CD4-positive, alpha-beta T cell (primary cell): ENCODE measurements at regions of chr3 and their contacts with region 1.

Region 1: DNA sequence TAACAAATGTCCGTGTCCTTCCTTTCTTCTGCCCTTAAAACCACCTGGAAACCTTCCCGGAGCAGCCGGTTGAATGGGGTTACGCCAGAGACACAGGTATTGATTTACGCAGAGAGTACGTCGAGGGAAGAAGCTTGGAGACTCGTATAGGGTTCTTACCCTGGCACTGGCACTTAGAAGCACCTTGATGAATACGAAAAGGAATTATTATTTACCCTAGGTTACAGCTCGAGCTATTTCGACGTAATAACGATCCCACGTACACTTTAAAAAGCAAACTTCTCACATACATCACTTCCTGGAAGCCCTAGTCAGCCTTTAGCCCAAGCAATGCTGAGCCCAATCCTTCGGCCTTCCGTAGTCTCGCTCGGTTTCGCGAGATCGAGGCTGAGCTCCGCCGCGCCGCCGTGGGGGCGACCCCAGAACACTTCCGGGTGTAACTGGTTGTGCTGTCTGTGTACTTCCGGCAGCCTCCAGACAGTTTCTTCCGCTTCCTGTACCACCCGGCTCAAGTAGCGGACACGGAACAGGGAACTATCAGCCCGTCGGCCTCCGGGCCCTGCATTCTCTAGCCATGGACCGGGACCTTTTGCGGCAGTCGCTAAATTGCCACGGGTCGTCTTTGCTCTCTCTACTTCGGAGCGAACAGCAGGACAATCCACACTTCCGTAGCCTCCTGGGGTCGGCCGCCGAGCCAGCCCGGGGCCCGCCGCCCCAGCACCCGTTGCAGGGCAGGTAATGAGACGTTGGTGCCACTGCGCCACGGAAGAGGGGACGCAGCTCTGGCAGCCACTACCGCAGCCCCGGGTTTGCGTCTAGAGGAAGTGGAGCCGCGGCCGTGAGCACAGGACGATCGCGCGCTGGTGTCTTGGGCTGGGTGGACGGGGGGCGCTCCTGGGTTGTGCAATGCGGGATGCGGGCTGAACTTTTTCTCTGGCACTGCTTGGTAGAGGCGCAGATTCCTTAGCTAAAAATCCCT is at the start of gene TTC14:
- DNase-seq: peak; percentile 85 to 97 (median 90)
- ATAC-seq: peak; percentile 87
- H3K4me3 ChIP-seq: peak within 1 kb of the TSS; percentile 83
- H3K4me3 Mint-ChIP-seq: peak within 1 kb of the TSS; percentile 96
- H3K27ac ChIP-seq: peak within 1 kb of the TSS; percentile 93
- H3K27ac Mint-ChIP-seq: peak within 1 kb of the TSS; percentile 95
- H3K4me1 ChIP-seq: peaks cover 12% of the 10 kb centered on the region
- H3K4me1 Mint-ChIP-seq: peaks cover 47% of the 10 kb centered on the region
- H3K27me3 ChIP-seq: no peaks in the 10 kb centered on the region
- H3K27me3 Mint-ChIP-seq: peaks cover 25% of the 10 kb centered on the region
- CTCF ChIP-seq: no peak
- total RNA-seq, gene TTC14: 79.0 to 84.4 TPM

Region 2: GRCh38 chr3:179355996-179356395 is 1246.0 kb before region 1 on chr3:
- CTCF ChIA-PET with region 1: no interaction called
- POLR2A ChIA-PET with region 1: no interaction called
- intact Hi-C with region 1: loop called in 1 of 2 experiments (anchors 10 kb)
- DNase-seq: no peak
- ATAC-seq: no peak
- H3K4me3 ChIP-seq: no peak overlapping the region
- H3K4me3 Mint-ChIP-seq: no peak overlapping the region
- H3K27ac ChIP-seq: no peak overlapping the region
- H3K27ac Mint-ChIP-seq: no peak overlapping the region
- H3K4me1 ChIP-seq: no peaks in the 10 kb centered on the region
- H3K4me1 Mint-ChIP-seq: peaks cover 32% of the 10 kb centered on the region
- H3K27me3 ChIP-seq: no peaks in the 10 kb centered on the region
- H3K27me3 Mint-ChIP-seq: no peaks in the 10 kb centered on the region
- CTCF ChIP-seq: no peak

Region 3: GRCh38 chr3:179562591-179563270 is 1039.2 kb before region 1 on chr3 and contains the start of gene ACTL6A:
- CTCF ChIA-PET with region 1: no interaction called
- POLR2A ChIA-PET with region 1: interaction called, 3 read pairs
- intact Hi-C with region 1: loop called in 1 of 2 experiments (anchors 5 kb)
- DNase-seq: peak; percentile 94 to 99 (median 98)
- ATAC-seq: peak; percentile 90
- H3K4me3 ChIP-seq: peak within 1 kb of the TSS; percentile 83
- H3K4me3 Mint-ChIP-seq: peak within 1 kb of the TSS; percentile 91
- H3K27ac ChIP-seq: peak within 1 kb of the TSS; percentile 38 to 57
- H3K27ac Mint-ChIP-seq: peak within 1 kb of the TSS; percentile 85
- H3K4me1 ChIP-seq: peaks cover 31% of the 10 kb centered on the region
- H3K4me1 Mint-ChIP-seq: peaks cover 30% of the 10 kb centered on the region
- H3K27me3 ChIP-seq: no peaks in the 10 kb centered on the region
- H3K27me3 Mint-ChIP-seq: peaks cover 5% of the 10 kb centered on the region
- CTCF ChIP-seq: no peak
- total RNA-seq, gene ACTL6A: 19.0 to 19.3 TPM

Region 4: GRCh38 chr3:179653096-179653797 is 948.7 kb before region 1 on chr3:
- CTCF ChIA-PET with region 1: no interaction called
- POLR2A ChIA-PET with region 1: interaction called, 12 read pairs
- intact Hi-C with region 1: loop called in 1 of 2 experiments (anchors 5 kb)
- DNase-seq: peak; percentile 44 to 82 (median 56)
- ATAC-seq: peak; percentile 64
- H3K4me3 ChIP-seq: peak overlapping the region; percentile 94
- H3K4me3 Mint-ChIP-seq: peak overlapping the region; percentile 98
- H3K27ac ChIP-seq: peak overlapping the region; percentile 47 to 48
- H3K27ac Mint-ChIP-seq: peak overlapping the region; percentile 91
- H3K4me1 ChIP-seq: peaks cover 22% of the 10 kb centered on the region
- H3K4me1 Mint-ChIP-seq: peaks cover 45% of the 10 kb centered on the region
- H3K27me3 ChIP-seq: no peaks in the 10 kb centered on the region
- H3K27me3 Mint-ChIP-seq: no peaks in the 10 kb centered on the region
- CTCF ChIP-seq: no peak

Region 5: DNA sequence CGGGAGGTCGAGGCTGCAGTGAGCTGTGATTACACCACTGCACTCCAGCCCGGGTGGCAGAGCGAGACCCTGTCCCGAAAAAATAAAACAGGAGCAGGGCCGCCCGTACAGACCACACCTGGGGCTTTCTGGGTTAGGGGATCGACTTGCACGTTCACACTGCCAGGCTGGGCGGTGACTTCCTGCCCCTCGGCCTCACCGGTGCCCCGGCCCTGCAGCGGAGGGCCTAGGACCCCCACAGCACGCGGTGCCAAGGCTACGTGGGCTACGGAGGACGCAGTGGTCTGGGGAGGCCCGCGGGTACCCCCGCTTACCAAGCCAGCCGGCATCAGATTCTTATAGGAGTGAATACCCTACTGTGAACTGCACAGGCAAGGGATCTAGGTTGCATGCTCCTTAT is 11.6 kb before region 1 on chr3:
- CTCF ChIA-PET with region 1: no interaction called
- POLR2A ChIA-PET with region 1: no interaction called
- intact Hi-C with region 1: no loop called
- DNase-seq: no peak
- ATAC-seq: no peak
- H3K4me3 ChIP-seq: no peak overlapping the region
- H3K4me3 Mint-ChIP-seq: no peak overlapping the region
- H3K27ac ChIP-seq: no peak overlapping the region
- H3K27ac Mint-ChIP-seq: no peak overlapping the region
- H3K4me1 ChIP-seq: no peaks in the 10 kb centered on the region
- H3K4me1 Mint-ChIP-seq: no peaks in the 10 kb centered on the region
- H3K27me3 ChIP-seq: peaks cover 8 to 26% of the 10 kb centered on the region in 2 experiments
- H3K27me3 Mint-ChIP-seq: peaks cover 61% of the 10 kb centered on the region
- CTCF ChIP-seq: no peak

Region 6: DNA sequence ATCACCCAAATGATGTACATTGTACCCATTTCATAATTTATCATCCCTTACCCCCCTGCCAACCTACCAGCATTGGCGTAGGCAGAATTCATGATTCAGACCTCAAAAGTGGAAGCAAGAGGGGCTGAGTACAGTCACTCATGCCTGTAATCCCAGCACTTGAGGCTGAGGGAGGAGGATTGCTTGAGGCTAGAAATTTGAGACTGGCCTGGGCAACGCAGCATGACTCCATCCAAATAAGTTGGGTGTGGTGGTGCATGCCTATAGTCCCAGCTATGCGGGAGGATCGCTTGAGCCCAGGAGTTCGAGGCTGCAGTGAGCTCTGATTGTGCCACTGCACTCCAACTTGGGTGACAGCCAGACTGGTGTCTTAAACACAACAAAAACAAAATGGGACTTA is 10.4 kb after region 1 on chr3:
- CTCF ChIA-PET with region 1: no interaction called
- POLR2A ChIA-PET with region 1: interaction called, 23 read pairs
- intact Hi-C with region 1: no loop called
- DNase-seq: no peak
- ATAC-seq: no peak
- H3K4me3 ChIP-seq: no peak overlapping the region
- H3K4me3 Mint-ChIP-seq: no peak overlapping the region
- H3K27ac ChIP-seq: no peak overlapping the region
- H3K27ac Mint-ChIP-seq: no peak overlapping the region
- H3K4me1 ChIP-seq: no peaks in the 10 kb centered on the region
- H3K4me1 Mint-ChIP-seq: peaks cover 10% of the 10 kb centered on the region
- H3K27me3 ChIP-seq: no peaks in the 10 kb centered on the region
- H3K27me3 Mint-ChIP-seq: no peaks in the 10 kb centered on the region
- CTCF ChIP-seq: no peak

Region 7: GRCh38 chr3:180657094-180657493 is 55.1 kb after region 1 on chr3:
- CTCF ChIA-PET with region 1: no interaction called
- POLR2A ChIA-PET with region 1: no interaction called
- intact Hi-C with region 1: no loop called
- DNase-seq: no peak
- ATAC-seq: no peak
- H3K4me3 ChIP-seq: no peak overlapping the region
- H3K4me3 Mint-ChIP-seq: no peak overlapping the region
- H3K27ac ChIP-seq: no peak overlapping the region
- H3K27ac Mint-ChIP-seq: no peak overlapping the region
- H3K4me1 ChIP-seq: no peaks in the 10 kb centered on the region
- H3K4me1 Mint-ChIP-seq: no peaks in the 10 kb centered on the region
- H3K27me3 ChIP-seq: peaks cover 6 to 9% of the 10 kb centered on the region in 2 experiments
- H3K27me3 Mint-ChIP-seq: peaks cover 46% of the 10 kb centered on the region
- CTCF ChIP-seq: no peak

Region 8: GRCh38 chr3:180912304-180913296 is 310.6 kb after region 1 on chr3 and contains the start of gene FXR1:
- CTCF ChIA-PET with region 1: interaction called, 4 read pairs
- POLR2A ChIA-PET with region 1: interaction called, 27 read pairs
- intact Hi-C with region 1: loop called (anchors 1 to 2 kb)
- DNase-seq: peak; percentile 79 to 94 (median 85)
- ATAC-seq: peak; percentile 90
- H3K4me3 ChIP-seq: peak within 1 kb of the TSS; percentile 98
- H3K4me3 Mint-ChIP-seq: peak within 1 kb of the TSS; percentile 97
- H3K27ac ChIP-seq: peak within 1 kb of the TSS; percentile 89 to 94
- H3K27ac Mint-ChIP-seq: peak within 1 kb of the TSS; percentile 94
- H3K4me1 ChIP-seq: peaks cover 29% of the 10 kb centered on the region
- H3K4me1 Mint-ChIP-seq: peaks cover 65% of the 10 kb centered on the region
- H3K27me3 ChIP-seq: no peaks in the 10 kb centered on the region
- H3K27me3 Mint-ChIP-seq: no peaks in the 10 kb centered on the region
- CTCF ChIP-seq: peak; percentile 68
- total RNA-seq, gene FXR1: 172 to 174 TPM

Region 9: DNA sequence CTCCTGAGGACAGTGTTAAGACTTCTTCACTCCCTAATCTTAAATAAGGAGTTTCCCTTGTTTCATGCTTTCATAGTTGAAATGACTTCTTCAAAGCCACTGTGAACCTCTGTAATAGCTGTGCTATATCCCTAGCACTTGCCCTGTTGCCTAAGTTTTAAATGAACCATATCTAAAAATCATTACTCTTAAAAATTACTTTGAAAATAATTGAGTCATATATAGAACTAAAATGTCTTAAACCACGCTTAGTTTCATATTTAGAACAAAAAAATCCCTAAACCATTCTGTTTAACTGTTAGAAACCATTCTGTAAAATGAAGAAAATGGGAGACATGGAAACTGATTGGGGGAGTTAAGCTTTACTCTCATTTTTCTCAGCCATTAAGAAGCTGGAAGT is 357.7 kb after region 1 on chr3:
- CTCF ChIA-PET with region 1: no interaction called
- POLR2A ChIA-PET with region 1: no interaction called
- intact Hi-C with region 1: no loop called
- DNase-seq: no peak
- ATAC-seq: no peak
- H3K4me3 ChIP-seq: no peak overlapping the region
- H3K4me3 Mint-ChIP-seq: no peak overlapping the region
- H3K27ac ChIP-seq: no peak overlapping the region
- H3K27ac Mint-ChIP-seq: peak overlapping the region; percentile 36
- H3K4me1 ChIP-seq: no peaks in the 10 kb centered on the region
- H3K4me1 Mint-ChIP-seq: no peaks in the 10 kb centered on the region
- H3K27me3 ChIP-seq: no peaks in the 10 kb centered on the region
- H3K27me3 Mint-ChIP-seq: no peaks in the 10 kb centered on the region
- CTCF ChIP-seq: no peak

Region 10: GRCh38 chr3:180989291-180990163 is 387.6 kb after region 1 on chr3 and contains the start of gene DNAJC19:
- CTCF ChIA-PET with region 1: no interaction called
- POLR2A ChIA-PET with region 1: interaction called, 14 read pairs
- intact Hi-C with region 1: loop called in 1 of 2 experiments (anchors 5 kb)
- DNase-seq: peak; percentile 82 to 97 (median 85)
- ATAC-seq: peak; percentile 96
- H3K4me3 ChIP-seq: peak within 1 kb of the TSS; percentile 85
- H3K4me3 Mint-ChIP-seq: peak within 1 kb of the TSS; percentile 99
- H3K27ac ChIP-seq: peak within 1 kb of the TSS; percentile 65 to 66
- H3K27ac Mint-ChIP-seq: peak within 1 kb of the TSS; percentile 94
- H3K4me1 ChIP-seq: peaks cover 8% of the 10 kb centered on the region
- H3K4me1 Mint-ChIP-seq: peaks cover 50% of the 10 kb centered on the region
- H3K27me3 ChIP-seq: no peaks in the 10 kb centered on the region
- H3K27me3 Mint-ChIP-seq: peaks cover 5% of the 10 kb centered on the region
- CTCF ChIP-seq: no peak
- total RNA-seq, gene DNAJC19: 28.7 to 40.2 TPM

Region 11: DNA sequence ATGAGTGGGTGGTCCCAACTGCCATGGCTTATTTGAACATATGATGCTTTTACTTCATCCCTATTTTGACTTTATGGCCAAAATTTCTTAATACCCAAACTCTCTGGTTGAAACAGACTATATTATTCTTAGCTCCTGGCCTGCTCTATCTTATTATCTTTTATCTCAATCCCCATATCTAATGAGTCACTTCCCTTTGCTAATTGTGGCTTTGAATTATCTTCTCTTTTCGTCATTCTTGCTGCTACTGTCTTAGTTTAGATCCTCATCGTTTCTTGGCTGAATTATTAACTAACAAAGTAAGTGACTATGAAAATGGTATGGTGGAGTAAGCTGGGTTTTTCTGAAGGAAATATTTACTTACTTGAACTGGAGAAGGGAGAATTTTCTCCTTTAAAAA is 415.7 kb after region 1 on chr3:
- CTCF ChIA-PET with region 1: no interaction called
- POLR2A ChIA-PET with region 1: no interaction called
- intact Hi-C with region 1: no loop called
- DNase-seq: no peak
- ATAC-seq: no peak
- H3K4me3 ChIP-seq: no peak overlapping the region
- H3K4me3 Mint-ChIP-seq: no peak overlapping the region
- H3K27ac ChIP-seq: no peak overlapping the region
- H3K27ac Mint-ChIP-seq: no peak overlapping the region
- H3K4me1 ChIP-seq: no peaks in the 10 kb centered on the region
- H3K4me1 Mint-ChIP-seq: no peaks in the 10 kb centered on the region
- H3K27me3 ChIP-seq: no peaks in the 10 kb centered on the region
- H3K27me3 Mint-ChIP-seq: peaks cover 13% of the 10 kb centered on the region
- CTCF ChIP-seq: no peak